PC-9 (cell line): ENCODE measurements at regions of chr14 and their contacts with region 1.

Region 1: DNA sequence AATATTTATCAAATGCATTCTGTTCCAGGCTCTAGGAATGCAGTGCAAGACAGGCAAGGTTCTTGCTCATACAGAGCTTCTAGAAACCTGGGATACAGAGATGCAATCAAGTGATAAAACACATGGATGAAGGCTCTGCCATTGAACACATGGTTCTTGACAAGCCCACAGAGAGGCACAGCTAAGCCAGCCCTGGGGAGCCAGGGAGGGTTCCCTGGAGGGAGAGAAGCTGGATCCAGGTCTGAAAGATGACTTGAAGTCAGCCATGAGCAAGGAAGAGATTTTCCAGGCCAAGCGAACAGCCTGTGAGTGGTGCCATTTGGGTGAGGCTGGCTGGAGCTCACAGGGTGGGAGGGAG is 66.2 kb downstream of the IRF2BPL start:
- DNase-seq: no peak
- H3K4me3 ChIP-seq: peak overlapping the region; percentile 48
- H3K27ac ChIP-seq: peak overlapping the region; percentile 90
- H3K4me1 ChIP-seq: peaks cover 65% of the 10 kb centered on the region
- H3K27me3 ChIP-seq: no peaks in the 10 kb centered on the region
- CTCF ChIP-seq: no peak

Region 2: DNA sequence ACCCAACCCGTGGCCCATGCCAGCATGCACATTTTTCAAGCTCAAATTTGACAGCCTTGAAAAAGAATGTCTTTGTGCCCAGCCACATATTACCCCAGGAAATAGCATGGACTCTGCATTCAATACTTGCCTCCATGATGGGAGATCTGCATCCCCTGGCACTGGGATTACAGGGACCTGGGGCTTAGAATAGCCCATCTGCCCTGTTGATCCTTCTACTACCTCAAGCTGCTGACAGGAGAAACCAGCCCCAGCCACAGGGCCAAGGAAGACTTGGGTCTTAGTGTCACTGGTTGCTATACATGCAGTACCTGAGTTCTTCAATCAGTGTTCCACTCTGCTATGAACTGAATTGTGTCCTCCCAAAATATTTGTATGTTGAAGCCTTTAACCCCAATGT is 50.8 kb before region 1 on chr14:
- CTCF ChIA-PET with region 1: interaction called, 27 read pairs
- POLR2A ChIA-PET with region 1: no interaction called
- intact Hi-C with region 1: no loop called
- DNase-seq: no peak
- H3K4me3 ChIP-seq: no peak overlapping the region
- H3K27ac ChIP-seq: no peak overlapping the region
- H3K4me1 ChIP-seq: peaks cover 42% of the 10 kb centered on the region
- H3K27me3 ChIP-seq: no peaks in the 10 kb centered on the region
- CTCF ChIP-seq: no peak

Region 3: GRCh38 chr14:76947078-76947837 is 15.0 kb before region 1 on chr14:
- CTCF ChIA-PET with region 1: interaction called, 7 read pairs
- POLR2A ChIA-PET with region 1: interaction called, 11 read pairs
- intact Hi-C with region 1: loop called (anchors 1 kb)
- DNase-seq: peak; percentile 95 to 100
- H3K4me3 ChIP-seq: peak overlapping the region; percentile 15; the same call in 1 of the 2 replicates
- H3K27ac ChIP-seq: peak overlapping the region; percentile 93
- H3K4me1 ChIP-seq: peaks cover 81% of the 10 kb centered on the region
- H3K27me3 ChIP-seq: no peaks in the 10 kb centered on the region
- CTCF ChIP-seq: peak; percentile 59; the same call in 1 of the 2 replicates

Region 4: GRCh38 chr14:76985540-76986230 is 23.4 kb after region 1 on chr14:
- CTCF ChIA-PET with region 1: no interaction called
- POLR2A ChIA-PET with region 1: interaction called, 14 read pairs
- intact Hi-C with region 1: no loop called
- DNase-seq: peak in 1 of 2 experiments; percentile 61
- H3K4me3 ChIP-seq: no peak overlapping the region
- H3K27ac ChIP-seq: no peak overlapping the region
- H3K4me1 ChIP-seq: no peaks in the 10 kb centered on the region
- H3K27me3 ChIP-seq: no peaks in the 10 kb centered on the region
- CTCF ChIP-seq: no peak

Region 5: GRCh38 chr14:76997256-76997970 is 35.1 kb after region 1 on chr14:
- CTCF ChIA-PET with region 1: interaction called, 3 read pairs
- POLR2A ChIA-PET with region 1: interaction called, 20 read pairs
- intact Hi-C with region 1: no loop called
- DNase-seq: peak in 1 of 2 experiments; percentile 62
- H3K4me3 ChIP-seq: no peak overlapping the region
- H3K27ac ChIP-seq: no peak overlapping the region
- H3K4me1 ChIP-seq: peaks cover 22% of the 10 kb centered on the region
- H3K27me3 ChIP-seq: no peaks in the 10 kb centered on the region
- CTCF ChIP-seq: no peak

Region 6: DNA sequence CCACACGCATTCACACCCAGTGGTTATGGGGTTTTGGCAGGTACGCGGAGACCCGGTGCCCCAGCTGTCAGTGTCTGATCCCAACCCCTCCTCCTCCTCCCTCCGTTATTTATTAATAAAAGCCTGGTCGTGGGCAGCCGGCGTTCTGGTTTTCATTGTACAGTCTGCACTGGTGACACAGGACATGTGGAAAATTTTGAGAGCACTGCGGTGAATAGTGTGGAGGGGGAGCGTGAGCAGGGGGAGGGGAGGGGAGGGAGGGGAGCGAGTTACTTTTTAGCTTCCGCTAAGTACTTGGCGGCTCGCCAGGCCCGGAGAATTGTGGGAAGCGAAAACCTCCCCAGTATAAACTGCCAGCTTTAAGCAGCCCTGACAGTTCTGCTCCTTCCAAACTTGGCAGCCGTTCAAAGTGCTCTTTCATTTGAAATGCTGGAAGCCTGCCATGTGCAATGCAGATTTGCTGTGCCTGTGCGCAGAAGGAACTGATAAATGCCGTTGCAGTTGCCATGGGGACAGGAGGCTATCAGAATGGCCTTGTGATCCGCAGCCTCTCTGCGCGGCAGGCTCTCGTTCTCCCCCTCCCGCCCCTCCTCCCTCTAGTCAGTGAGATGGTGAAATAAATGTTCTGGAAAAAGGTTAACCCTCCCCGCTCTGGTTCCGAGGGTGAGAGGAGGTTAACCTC is 77.9 kb after region 1 on chr14:
- CTCF ChIA-PET with region 1: interaction called, 3 read pairs
- POLR2A ChIA-PET with region 1: interaction called, 10 read pairs
- intact Hi-C with region 1: no loop called
- DNase-seq: peak; percentile 99
- H3K4me3 ChIP-seq: peak overlapping the region; percentile 41
- H3K27ac ChIP-seq: peak overlapping the region; percentile 85
- H3K4me1 ChIP-seq: peaks cover 95% of the 10 kb centered on the region
- H3K27me3 ChIP-seq: no peaks in the 10 kb centered on the region
- CTCF ChIP-seq: no peak